Gastrocnemius medialis (tissue), 4 donors: ENCODE measurements at regions of chr17 and their contacts with region 1.

Region 1: GRCh38 chr17:82551779-82552457 is 32.4 kb downstream of the FOXK2 start:
- DNase-seq: peak; percentile 54 to 76
- ATAC-seq: peak; percentile 55 to 65
- H3K4me3 ChIP-seq: no peak overlapping the region
- H3K27ac ChIP-seq: peak overlapping the region; percentile 1 to 73 (median 69)
- H3K4me1 ChIP-seq: peaks cover 60 to 68% of the 10 kb centered on the region in 2 donors
- H3K27me3 ChIP-seq: no peaks in the 10 kb centered on the region
- CTCF ChIP-seq: peak; percentile 65 to 85 (median 76)
- POLR2A ChIP-seq: no peak

Region 2: DNA sequence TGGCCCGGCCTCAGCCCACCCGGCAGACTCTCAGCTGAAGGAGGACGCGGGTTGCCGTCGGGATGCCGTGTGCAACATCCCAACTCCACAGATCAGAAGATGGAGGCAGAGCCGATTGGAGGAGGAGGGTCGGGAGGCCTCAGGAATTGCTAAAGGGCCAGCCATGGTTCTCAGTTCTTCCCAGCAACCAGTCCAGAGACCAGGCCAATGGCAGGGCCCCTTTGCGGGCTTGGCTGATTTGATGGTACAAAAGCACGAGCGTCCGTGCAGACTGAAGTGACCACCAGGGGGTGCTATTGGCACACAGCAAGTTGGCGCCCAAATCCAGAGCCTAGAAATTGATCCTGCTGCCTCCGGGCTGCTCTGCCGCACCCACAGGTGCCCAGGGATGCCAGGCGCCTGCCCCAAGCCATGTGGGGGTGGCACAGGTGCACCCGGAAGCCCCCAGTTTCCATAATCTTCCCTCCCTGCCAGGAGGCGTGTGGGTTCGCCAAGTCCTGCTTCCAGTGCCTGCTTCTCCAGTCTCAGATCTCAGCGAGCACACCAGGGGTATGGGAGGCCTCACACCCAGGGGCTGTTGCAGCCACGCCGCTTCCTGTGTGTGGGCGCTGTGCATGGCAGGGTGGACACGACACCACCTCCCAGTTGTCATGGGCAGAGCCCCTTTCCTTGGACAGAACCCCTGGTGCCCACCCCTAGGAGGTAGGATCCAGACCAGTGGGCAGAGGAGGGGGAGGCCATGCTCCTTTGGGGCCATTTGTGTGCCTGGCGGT is 200.0 kb before region 1 on chr17:
- in situ Hi-C with region 1: loop called in 2 of 4 experiments (anchors 10 kb)
- intact Hi-C with region 1: loop called (anchors 2 kb)
- DNase-seq: peak; percentile 62 to 72
- ATAC-seq: peak; percentile 74 to 88
- H3K4me3 ChIP-seq: no peak overlapping the region
- H3K27ac ChIP-seq: no peak overlapping the region
- H3K4me1 ChIP-seq: no peaks in the 10 kb centered on the region
- H3K27me3 ChIP-seq: peaks cover 8 to 21% (median 13%) of the 10 kb centered on the region in 3 donors
- CTCF ChIP-seq: peak; percentile 89 to 98 (median 97)
- POLR2A ChIP-seq: no peak

Region 3: GRCh38 chr17:82418001-82418986 is 133.6 kb before region 1 on chr17 and contains the starts of genes HEXD and OGFOD3:
- in situ Hi-C with region 1: no loop called
- intact Hi-C with region 1: loop called (anchors 5 kb)
- DNase-seq: peak; percentile 57 to 68
- ATAC-seq: peak; percentile 92 to 93
- H3K4me3 ChIP-seq: peak within 1 kb of the TSS; percentile 71 to 95 (median 83)
- H3K27ac ChIP-seq: peak within 1 kb of the TSS; percentile 85 to 99 (median 97)
- H3K4me1 ChIP-seq: peaks cover 16 to 19% of the 10 kb centered on the region in 2 donors
- H3K27me3 ChIP-seq: no peaks in the 10 kb centered on the region
- CTCF ChIP-seq: peak in 3 of 5 experiments; percentile 10 to 33 (median 15)
- POLR2A ChIP-seq: peak; percentile 54 to 70
- total RNA-seq, gene HEXD: 15.5 to 35.1 (median 22.5) TPM
- total RNA-seq, gene OGFOD3: 25.8 to 72.1 (median 27.7) TPM

Region 4: GRCh38 chr17:82457997-82458864 is 93.7 kb before region 1 on chr17 and contains the start of gene NARF:
- in situ Hi-C with region 1: no loop called
- intact Hi-C with region 1: loop called (anchors 2 kb)
- DNase-seq: peak; percentile 99
- ATAC-seq: peak; percentile 92 to 94
- H3K4me3 ChIP-seq: peak within 1 kb of the TSS; percentile 75 to 98 (median 80)
- H3K27ac ChIP-seq: peak within 1 kb of the TSS; percentile 99 to 100 (median 100)
- H3K4me1 ChIP-seq: peaks cover 16 to 21% of the 10 kb centered on the region in 2 donors
- H3K27me3 ChIP-seq: no peaks in the 10 kb centered on the region
- CTCF ChIP-seq: no peak
- POLR2A ChIP-seq: peak; percentile 99 to 100
- total RNA-seq, gene NARF: 29.6 to 63.4 (median 49.0) TPM

Region 5: DNA sequence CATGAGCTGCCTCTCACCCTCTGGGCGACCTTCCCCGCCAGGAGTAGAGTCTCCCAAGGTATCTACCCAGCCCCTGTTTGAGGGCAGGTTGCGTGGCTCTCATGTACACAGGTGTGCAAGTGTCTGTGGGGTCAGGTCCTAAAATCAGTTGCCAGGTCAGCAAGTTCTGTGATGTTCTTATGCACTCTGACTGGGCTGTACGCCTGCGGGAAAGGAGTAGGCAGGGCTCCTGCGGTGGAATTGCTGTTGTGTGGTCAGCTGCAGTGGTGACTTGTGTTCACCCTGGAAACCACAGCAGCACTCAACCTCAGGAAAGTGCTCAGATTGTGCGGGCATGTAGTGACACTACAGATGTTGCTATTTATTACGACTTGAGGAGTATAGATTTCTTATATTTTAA is 74.0 kb before region 1 on chr17:
- in situ Hi-C with region 1: no loop called
- intact Hi-C with region 1: no loop called
- DNase-seq: no peak
- ATAC-seq: no peak
- H3K4me3 ChIP-seq: no peak overlapping the region
- H3K27ac ChIP-seq: no peak overlapping the region
- H3K4me1 ChIP-seq: no peaks in the 10 kb centered on the region
- H3K27me3 ChIP-seq: no peaks in the 10 kb centered on the region
- CTCF ChIP-seq: no peak
- POLR2A ChIP-seq: no peak

Region 6: DNA sequence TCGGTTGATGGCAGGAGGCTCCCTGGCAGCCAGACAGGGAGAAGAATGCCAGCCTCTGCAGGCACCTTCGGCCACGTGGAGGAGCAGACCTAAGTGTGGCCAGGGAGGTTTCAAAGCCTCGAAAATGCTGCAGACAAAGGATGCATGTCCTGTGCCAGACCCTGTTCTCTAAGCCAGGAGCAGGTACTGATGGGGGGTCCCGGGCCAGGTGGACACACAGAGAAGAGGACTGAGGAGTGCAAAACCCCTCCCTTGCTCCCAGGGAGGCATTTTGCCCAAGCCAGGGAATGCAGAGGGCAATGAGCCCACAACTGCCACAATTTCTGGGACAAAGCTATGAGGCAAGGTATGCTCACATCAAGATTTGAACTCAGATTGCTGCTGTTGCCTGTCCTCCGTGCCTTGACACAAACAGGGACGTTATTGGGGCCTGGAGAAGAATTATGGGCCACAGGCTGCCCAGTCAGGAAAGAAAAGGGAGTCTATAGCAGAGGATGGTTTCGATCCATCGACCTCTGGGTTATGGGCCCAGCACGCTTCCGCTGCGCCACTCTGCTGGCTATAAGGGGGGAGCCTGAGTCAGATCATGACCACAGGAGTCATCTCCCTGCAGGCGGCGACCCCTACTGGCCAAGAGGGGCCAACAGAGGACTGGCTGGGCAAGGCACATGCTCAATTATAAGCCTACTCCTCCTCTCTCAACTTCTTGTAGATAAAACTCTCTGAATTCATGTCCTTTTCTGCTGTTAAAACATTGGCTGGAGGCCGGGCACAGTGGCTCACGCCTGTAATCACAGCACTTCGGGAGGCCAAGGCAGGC is 57.5 kb before region 1 on chr17:
- in situ Hi-C with region 1: no loop called
- intact Hi-C with region 1: loop called (anchors 1 kb)
- DNase-seq: peak; percentile 71 to 81
- ATAC-seq: peak; percentile 51 to 57
- H3K4me3 ChIP-seq: no peak overlapping the region
- H3K27ac ChIP-seq: peak overlapping the region; percentile 42 to 66 (median 54)
- H3K4me1 ChIP-seq: peaks cover 12 to 18% of the 10 kb centered on the region in 2 donors
- H3K27me3 ChIP-seq: no peaks in the 10 kb centered on the region
- CTCF ChIP-seq: peak; percentile 64 to 84 (median 76)
- POLR2A ChIP-seq: no peak

Region 7: DNA sequence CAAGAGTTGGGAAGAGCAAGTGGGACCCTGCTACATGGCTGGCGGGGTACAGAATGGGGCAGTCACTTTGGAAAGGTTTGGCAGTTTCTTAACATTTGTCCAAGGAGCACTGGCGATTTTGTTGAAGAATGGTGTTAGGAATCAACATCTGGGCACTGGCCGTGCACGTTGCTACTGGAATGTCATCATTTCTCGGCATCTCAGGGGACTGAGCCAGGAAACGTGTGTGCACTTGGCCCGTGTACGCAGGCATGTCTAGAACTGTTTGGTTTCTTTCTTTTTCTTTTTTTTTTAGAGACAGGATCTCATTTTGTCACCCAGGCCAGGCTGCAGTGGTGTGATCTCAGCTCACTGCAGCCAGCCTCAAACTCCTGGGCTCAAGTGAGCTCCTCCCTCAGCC is 49.7 kb before region 1 on chr17:
- in situ Hi-C with region 1: loop called in 1 of 4 experiments (anchors 10 kb)
- intact Hi-C with region 1: loop called (anchors 1 kb)
- DNase-seq: no peak
- ATAC-seq: no peak
- H3K4me3 ChIP-seq: no peak overlapping the region
- H3K27ac ChIP-seq: no peak overlapping the region
- H3K4me1 ChIP-seq: peaks cover 4 to 9% of the 10 kb centered on the region in 2 donors
- H3K27me3 ChIP-seq: no peaks in the 10 kb centered on the region
- CTCF ChIP-seq: no peak
- POLR2A ChIP-seq: no peak

Region 8: DNA sequence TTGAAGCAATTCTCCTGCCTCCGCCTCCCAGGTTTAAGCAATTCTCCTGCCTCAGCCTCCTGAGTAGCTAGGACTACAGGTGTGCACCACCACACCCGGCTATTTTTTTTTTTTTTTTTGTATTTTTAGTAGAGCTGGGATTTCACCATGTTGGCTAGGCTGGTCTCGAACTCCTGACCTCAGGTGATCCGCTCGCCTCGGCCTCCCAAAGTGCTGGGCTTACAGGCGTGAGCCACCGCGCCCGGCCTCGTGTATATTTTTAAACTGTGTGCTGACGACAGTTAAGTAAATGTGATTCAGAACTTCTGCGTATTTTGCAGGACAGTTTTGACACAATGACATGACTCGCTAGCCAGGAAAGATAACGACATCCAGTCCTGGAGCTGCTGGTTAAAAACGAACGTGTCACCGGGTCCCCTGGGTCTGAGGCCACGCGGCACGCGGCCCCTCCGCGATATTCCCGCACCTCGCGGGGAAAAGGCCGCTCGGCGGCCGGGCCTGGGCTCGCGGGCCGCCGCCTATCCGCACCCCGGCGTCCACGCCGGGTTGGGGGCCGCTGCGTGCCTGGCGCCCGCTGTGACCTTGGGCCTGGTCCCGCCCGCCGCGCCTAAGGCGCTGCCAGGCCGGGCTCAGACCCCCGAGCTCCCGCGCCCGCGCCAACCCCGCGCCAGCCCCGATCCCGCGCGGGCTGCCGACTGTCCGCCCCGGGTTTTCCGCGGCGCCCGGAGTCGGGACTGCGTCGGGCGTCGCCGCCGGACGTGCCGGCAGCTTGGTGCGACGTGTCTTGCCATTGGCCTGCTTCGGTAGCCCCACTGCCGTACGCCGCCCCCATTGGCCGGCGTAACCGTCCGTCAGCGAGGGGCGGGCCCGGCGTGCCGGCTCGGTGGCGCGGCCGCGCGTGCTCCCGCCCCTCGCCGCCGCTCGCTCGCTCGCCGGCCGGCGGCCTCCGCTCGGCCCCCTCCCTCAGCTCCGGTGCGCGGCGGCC is 32.8 kb before region 1 on chr17 and contains the start of gene FOXK2:
- in situ Hi-C with region 1: no loop called
- intact Hi-C with region 1: loop called (anchors 2 kb)
- DNase-seq: peak; percentile 92 to 95
- ATAC-seq: peak; percentile 94 to 95
- H3K4me3 ChIP-seq: peak within 1 kb of the TSS; percentile 63 to 84 (median 73)
- H3K27ac ChIP-seq: peak within 1 kb of the TSS; percentile 85 to 97 (median 90)
- H3K4me1 ChIP-seq: peaks cover 21 to 23% of the 10 kb centered on the region in 2 donors
- H3K27me3 ChIP-seq: no peaks in the 10 kb centered on the region
- CTCF ChIP-seq: peak in 4 of 5 experiments; percentile 7 to 54 (median 26)
- POLR2A ChIP-seq: peak; percentile 93 to 95
- total RNA-seq, gene FOXK2: 70.7 to 109 (median 85.0) TPM